Natural killer cell (primary cell): ENCODE measurements at regions of chr3 and their contacts with region 1.

Region 1: GRCh38 chr3:143775459-143775858 is 72.8 kb downstream of the SLC9A9 start:
- DNase-seq: peak in 1 of 2 donors; percentile 65
- ATAC-seq: peak in 2 of 3 donors; percentile 66 to 73
- H3K4me3 ChIP-seq: no peak overlapping the region
- H3K4me3 Mint-ChIP-seq: no peak overlapping the region
- H3K27ac ChIP-seq: no peak overlapping the region
- H3K27ac Mint-ChIP-seq: no peak overlapping the region
- H3K4me1 ChIP-seq: no peaks in the 10 kb centered on the region
- H3K4me1 Mint-ChIP-seq: peaks cover 4 to 6% of the 10 kb centered on the region in 2 donors
- H3K27me3 ChIP-seq: no peaks in the 10 kb centered on the region
- H3K27me3 Mint-ChIP-seq: no peaks in the 10 kb centered on the region
- CTCF ChIP-seq: peak; percentile 64

Region 2: DNA sequence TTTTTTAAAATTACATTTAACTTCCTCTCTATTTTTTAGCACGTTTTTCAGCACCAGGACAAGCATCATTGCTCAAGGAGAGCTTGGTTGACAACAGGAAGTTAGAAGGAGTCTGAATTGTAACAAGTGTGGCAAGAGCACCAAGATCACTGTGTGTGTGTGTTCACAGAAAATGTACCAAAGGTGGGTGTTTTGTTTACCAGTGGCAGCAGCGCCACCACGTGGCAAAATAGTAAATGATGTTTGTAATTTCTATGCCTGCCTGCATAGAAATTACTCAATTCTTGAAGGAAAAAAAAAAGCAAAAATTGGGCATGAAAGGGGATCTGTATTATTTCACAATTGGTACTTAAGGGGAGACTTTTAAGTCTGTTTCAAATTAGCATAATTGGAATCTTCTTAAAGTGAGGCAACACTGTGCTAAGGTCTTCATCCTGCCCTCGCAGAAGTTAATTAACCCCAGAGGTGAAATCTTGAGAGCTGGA is 781.5 kb before region 1 on chr3:
- intact Hi-C with region 1: no loop called
- DNase-seq: peak; percentile 46 to 79
- ATAC-seq: peak; percentile 68 to 71 (median 69)
- H3K4me3 ChIP-seq: no peak overlapping the region
- H3K4me3 Mint-ChIP-seq: no peak overlapping the region
- H3K27ac ChIP-seq: no peak overlapping the region
- H3K27ac Mint-ChIP-seq: no peak overlapping the region
- H3K4me1 ChIP-seq: no peaks in the 10 kb centered on the region
- H3K4me1 Mint-ChIP-seq: peaks cover 0 to 7% of the 10 kb centered on the region in 2 donors
- H3K27me3 ChIP-seq: no peaks in the 10 kb centered on the region
- H3K27me3 Mint-ChIP-seq: peaks cover 12 to 17% of the 10 kb centered on the region in 2 donors
- CTCF ChIP-seq: peak; percentile 95

Region 3: GRCh38 chr3:143718463-143718862 is 57.0 kb before region 1 on chr3:
- intact Hi-C with region 1: no loop called
- DNase-seq: no peak
- ATAC-seq: no peak
- H3K4me3 ChIP-seq: no peak overlapping the region
- H3K4me3 Mint-ChIP-seq: no peak overlapping the region
- H3K27ac ChIP-seq: no peak overlapping the region
- H3K27ac Mint-ChIP-seq: no peak overlapping the region
- H3K4me1 ChIP-seq: no peaks in the 10 kb centered on the region
- H3K4me1 Mint-ChIP-seq: peaks cover 6% of the 10 kb centered on the region in 2 donors
- H3K27me3 ChIP-seq: no peaks in the 10 kb centered on the region
- H3K27me3 Mint-ChIP-seq: no peaks in the 10 kb centered on the region
- CTCF ChIP-seq: no peak

Region 4: DNA sequence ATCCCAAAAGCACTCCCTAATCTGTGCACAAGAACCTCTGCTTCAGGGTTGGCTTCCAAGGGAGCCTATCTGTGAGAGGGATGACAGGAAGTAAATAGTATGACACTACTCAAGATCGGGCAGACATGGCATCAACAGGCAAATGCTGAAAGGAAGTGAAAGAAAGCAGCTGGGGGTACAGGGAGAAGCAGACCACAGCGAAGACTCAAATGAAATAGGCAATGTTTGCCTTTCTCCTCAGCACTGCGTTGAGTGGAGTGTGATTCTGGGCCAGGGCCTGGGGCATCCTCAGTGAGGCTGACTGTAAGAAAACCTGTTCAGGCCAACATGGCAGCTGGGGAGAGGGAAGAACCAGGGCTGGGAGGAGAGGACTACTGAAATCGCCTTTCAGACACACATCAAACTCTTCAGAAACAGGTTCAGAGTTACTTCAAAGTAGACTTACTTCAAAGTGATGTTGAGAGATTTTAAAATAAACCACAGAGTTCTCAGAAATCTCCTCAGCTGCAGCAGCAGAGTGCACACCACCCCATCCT is 23.7 kb before region 1 on chr3:
- intact Hi-C with region 1: no loop called
- DNase-seq: peak in 1 of 2 donors; percentile 59
- ATAC-seq: no peak
- H3K4me3 ChIP-seq: no peak overlapping the region
- H3K4me3 Mint-ChIP-seq: no peak overlapping the region
- H3K27ac ChIP-seq: no peak overlapping the region
- H3K27ac Mint-ChIP-seq: no peak overlapping the region
- H3K4me1 ChIP-seq: no peaks in the 10 kb centered on the region
- H3K4me1 Mint-ChIP-seq: peaks cover 18 to 20% of the 10 kb centered on the region in 2 donors
- H3K27me3 ChIP-seq: no peaks in the 10 kb centered on the region
- H3K27me3 Mint-ChIP-seq: no peaks in the 10 kb centered on the region
- CTCF ChIP-seq: no peak

Region 5: GRCh38 chr3:143951351-143951971 is 176.0 kb after region 1 on chr3:
- intact Hi-C with region 1: loop called (anchors 1 kb)
- DNase-seq: peak in 1 of 2 donors; percentile 66
- ATAC-seq: peak in 2 of 3 donors; percentile 42 to 48
- H3K4me3 ChIP-seq: no peak overlapping the region
- H3K4me3 Mint-ChIP-seq: no peak overlapping the region
- H3K27ac ChIP-seq: no peak overlapping the region
- H3K27ac Mint-ChIP-seq: no peak overlapping the region
- H3K4me1 ChIP-seq: no peaks in the 10 kb centered on the region
- H3K4me1 Mint-ChIP-seq: peaks cover 10 to 12% of the 10 kb centered on the region in 2 donors
- H3K27me3 ChIP-seq: peaks cover 3% of the 10 kb centered on the region
- H3K27me3 Mint-ChIP-seq: peaks cover 13 to 37% of the 10 kb centered on the region in 2 donors
- CTCF ChIP-seq: peak; percentile 73